ENCODE measurements at regions of chr3 and their contacts with region 1.

Region 1: GRCh38 chr3:36408146-36408545 is 27.8 kb downstream of the STAC start:
- DNase-seq: peak in 1 of 2 experiments; percentile 3
- H3K4me3 ChIP-seq: no peak overlapping the region
- H3K4me3 Mint-ChIP-seq: no peak overlapping the region
- H3K27ac Mint-ChIP-seq: no peak overlapping the region
- H3K4me1 ChIP-seq: no peaks in the 10 kb centered on the region
- H3K4me1 Mint-ChIP-seq: no peaks in the 10 kb centered on the region
- H3K27me3 ChIP-seq: no peaks in the 10 kb centered on the region
- H3K27me3 Mint-ChIP-seq: peaks cover 15% of the 10 kb centered on the region
- CTCF ChIP-seq: peak in 1 of 2 experiments; percentile 17

Region 2: GRCh38 chr3:36075491-36075890 is 332.7 kb before region 1 on chr3:
- CTCF ChIA-PET with region 1: no interaction called
- POLR2A ChIA-PET with region 1: no interaction called
- intact Hi-C with region 1: no loop called
- DNase-seq: no peak
- H3K4me3 ChIP-seq: no peak overlapping the region
- H3K4me3 Mint-ChIP-seq: no peak overlapping the region
- H3K27ac Mint-ChIP-seq: no peak overlapping the region
- H3K4me1 ChIP-seq: no peaks in the 10 kb centered on the region
- H3K4me1 Mint-ChIP-seq: no peaks in the 10 kb centered on the region
- H3K27me3 ChIP-seq: no peaks in the 10 kb centered on the region
- H3K27me3 Mint-ChIP-seq: peaks cover 12% of the 10 kb centered on the region
- CTCF ChIP-seq: no peak

Region 3: DNA sequence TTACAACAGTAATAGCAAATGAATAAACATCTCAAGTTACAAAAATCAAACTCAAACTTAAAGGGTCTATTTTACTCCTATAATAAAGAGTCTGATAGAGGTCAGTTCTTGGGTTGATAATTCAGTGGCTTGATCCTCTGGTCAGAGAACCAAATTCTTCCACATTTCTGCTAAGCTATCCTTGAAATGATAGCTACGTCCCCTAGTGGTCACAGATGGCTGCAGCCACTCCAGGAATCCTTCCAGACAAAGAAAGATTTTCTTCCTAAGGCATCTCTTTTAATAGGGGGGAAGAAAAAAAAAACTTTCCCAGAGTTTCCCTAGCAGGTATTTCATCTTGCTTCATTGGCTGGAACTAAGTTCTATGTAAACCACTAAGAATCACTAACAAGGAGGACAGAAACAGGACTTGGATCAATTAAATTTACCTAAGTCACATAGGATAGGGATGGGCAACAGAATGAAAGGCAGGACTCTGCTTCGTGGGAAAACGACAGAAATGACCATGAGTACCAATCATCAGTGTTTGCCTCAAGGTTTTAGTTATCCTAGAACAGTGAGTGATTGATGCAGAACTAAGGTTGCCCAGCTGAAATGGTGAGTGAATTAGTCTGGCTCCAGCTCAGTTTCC is 132.9 kb after region 1 on chr3:
- CTCF ChIA-PET with region 1: no interaction called
- POLR2A ChIA-PET with region 1: no interaction called
- intact Hi-C with region 1: loop called (anchors 2 kb)
- DNase-seq: peak in 1 of 2 experiments; percentile 20
- H3K4me3 ChIP-seq: no peak overlapping the region
- H3K4me3 Mint-ChIP-seq: no peak overlapping the region
- H3K27ac Mint-ChIP-seq: no peak overlapping the region
- H3K4me1 ChIP-seq: no peaks in the 10 kb centered on the region
- H3K4me1 Mint-ChIP-seq: no peaks in the 10 kb centered on the region
- H3K27me3 ChIP-seq: no peaks in the 10 kb centered on the region; the same call in 1 of the 2 replicates
- H3K27me3 Mint-ChIP-seq: peaks cover 14% of the 10 kb centered on the region
- CTCF ChIP-seq: peak; percentile 56 to 85

Measured in Caco-2 (cell line).